GM12878 (cell line): ENCODE measurements at regions of chr16 and their contacts with region 1.

Region 1: GRCh38 chr16:50696575-50697420 is 3.4 kb downstream of the NOD2 start:
- DNase-seq: peak; percentile 82
- ATAC-seq: peak; percentile 76
- H3K4me3 ChIP-seq: peak overlapping the region; percentile 72; the same call in 1 of the 2 replicates
- H3K27ac ChIP-seq: peak overlapping the region; percentile 95
- H3K4me1 ChIP-seq: peaks cover 57% of the 10 kb centered on the region
- H3K27me3 ChIP-seq: no peaks in the 10 kb centered on the region
- CTCF ChIP-seq: no peak
- EP300 ChIP-seq: peak in 1 of 2 experiments; percentile 30; a peak in 2 of 4 replicates
- POLR2A ChIP-seq: 0 out of 2 replicates have a peak, but pooled peaks have one; percentile 47
- RAD21 ChIP-seq: no peak

Region 2: GRCh38 chr16:50273681-50274325 is 423.0 kb before region 1 on chr16:
- CTCF ChIA-PET with region 1: no interaction called
- POLR2A ChIA-PET with region 1: no interaction called
- RAD21 ChIA-PET with region 1: no interaction called
- SMC1A ChIA-PET with region 1: no interaction called
- in situ Hi-C with region 1: no loop called
- intact Hi-C with region 1: loop called (anchors 5 kb)
- DNase-seq: peak; percentile 64
- ATAC-seq: peak; percentile 80
- H3K4me3 ChIP-seq: peak overlapping the region; percentile 70
- H3K27ac ChIP-seq: peak overlapping the region; percentile 93
- H3K4me1 ChIP-seq: peaks cover 49% of the 10 kb centered on the region
- H3K27me3 ChIP-seq: no peaks in the 10 kb centered on the region
- CTCF ChIP-seq: no peak
- EP300 ChIP-seq: peak in 1 of 2 experiments; percentile 47; a peak in 2 of 4 replicates
- POLR2A ChIP-seq: peak; percentile 59
- RAD21 ChIP-seq: no peak

Region 3: DNA sequence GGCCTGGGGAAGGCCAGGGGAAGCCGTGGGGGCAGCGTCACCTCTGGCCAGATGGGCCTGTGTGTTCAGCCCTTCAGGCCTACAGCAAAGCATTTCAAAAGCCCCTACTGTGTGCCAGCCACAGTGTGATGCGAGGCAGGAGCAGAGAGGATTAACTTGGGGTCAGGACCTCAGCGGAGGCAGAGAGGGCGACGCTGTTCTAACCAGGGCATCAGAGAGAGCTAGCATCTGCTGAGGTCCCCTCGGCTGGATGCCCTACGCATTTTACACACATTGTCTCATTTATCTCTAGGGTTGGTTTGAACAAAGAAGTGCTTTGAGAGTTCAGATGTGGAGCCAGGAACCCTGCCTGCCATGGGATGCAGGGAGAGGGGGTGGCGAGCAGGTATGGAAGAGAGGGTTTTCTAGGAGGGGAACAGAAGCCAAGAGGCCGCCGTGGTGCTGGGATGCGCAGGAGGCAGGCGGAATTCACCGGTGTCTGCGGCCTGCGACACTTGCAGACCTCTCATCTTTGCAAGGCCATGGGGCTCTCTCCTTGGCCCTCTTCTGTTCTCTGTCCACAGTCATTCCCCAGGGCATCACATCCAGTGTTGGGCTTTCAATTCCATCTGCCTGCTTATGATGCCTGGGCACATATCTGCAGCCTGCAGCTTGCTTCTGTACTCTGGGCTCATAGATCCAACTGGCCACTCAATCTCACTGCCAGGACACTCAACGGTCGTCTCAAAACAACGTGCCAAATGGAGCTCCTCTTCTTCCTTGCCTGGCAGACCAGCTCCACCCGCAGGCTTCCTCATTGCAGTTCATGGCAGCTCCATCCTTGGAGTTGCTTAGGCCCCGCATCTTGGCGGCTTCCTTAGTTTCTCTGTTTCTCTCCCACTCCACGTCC is 156.7 kb before region 1 on chr16:
- CTCF ChIA-PET with region 1: no interaction called
- POLR2A ChIA-PET with region 1: no interaction called
- RAD21 ChIA-PET with region 1: no interaction called
- SMC1A ChIA-PET with region 1: no interaction called
- in situ Hi-C with region 1: no loop called
- intact Hi-C with region 1: no loop called
- DNase-seq: no peak
- ATAC-seq: no peak
- H3K4me3 ChIP-seq: no peak overlapping the region
- H3K27ac ChIP-seq: no peak overlapping the region
- H3K4me1 ChIP-seq: no peaks in the 10 kb centered on the region
- H3K27me3 ChIP-seq: no peaks in the 10 kb centered on the region; a peak in 2 of 4 replicates
- CTCF ChIP-seq: no peak
- EP300 ChIP-seq: no peak
- POLR2A ChIP-seq: no peak
- RAD21 ChIP-seq: no peak

Region 4: GRCh38 chr16:50611332-50611934 is 85.4 kb before region 1 on chr16:
- CTCF ChIA-PET with region 1: no interaction called
- POLR2A ChIA-PET with region 1: no interaction called
- RAD21 ChIA-PET with region 1: no interaction called
- SMC1A ChIA-PET with region 1: no interaction called
- in situ Hi-C with region 1: no loop called
- intact Hi-C with region 1: no loop called
- DNase-seq: no peak
- ATAC-seq: peak; percentile 58
- H3K4me3 ChIP-seq: no peak overlapping the region
- H3K27ac ChIP-seq: no peak overlapping the region
- H3K4me1 ChIP-seq: peaks cover 3% of the 10 kb centered on the region; the same call in 1 of the 2 replicates
- H3K27me3 ChIP-seq: no peaks in the 10 kb centered on the region
- CTCF ChIP-seq: 0 out of 6 replicates have a peak, but pooled peaks of 2 of the 3 experiments have one; percentile 2 to 12
- EP300 ChIP-seq: no peak
- POLR2A ChIP-seq: no peak
- RAD21 ChIP-seq: no peak

Region 5: DNA sequence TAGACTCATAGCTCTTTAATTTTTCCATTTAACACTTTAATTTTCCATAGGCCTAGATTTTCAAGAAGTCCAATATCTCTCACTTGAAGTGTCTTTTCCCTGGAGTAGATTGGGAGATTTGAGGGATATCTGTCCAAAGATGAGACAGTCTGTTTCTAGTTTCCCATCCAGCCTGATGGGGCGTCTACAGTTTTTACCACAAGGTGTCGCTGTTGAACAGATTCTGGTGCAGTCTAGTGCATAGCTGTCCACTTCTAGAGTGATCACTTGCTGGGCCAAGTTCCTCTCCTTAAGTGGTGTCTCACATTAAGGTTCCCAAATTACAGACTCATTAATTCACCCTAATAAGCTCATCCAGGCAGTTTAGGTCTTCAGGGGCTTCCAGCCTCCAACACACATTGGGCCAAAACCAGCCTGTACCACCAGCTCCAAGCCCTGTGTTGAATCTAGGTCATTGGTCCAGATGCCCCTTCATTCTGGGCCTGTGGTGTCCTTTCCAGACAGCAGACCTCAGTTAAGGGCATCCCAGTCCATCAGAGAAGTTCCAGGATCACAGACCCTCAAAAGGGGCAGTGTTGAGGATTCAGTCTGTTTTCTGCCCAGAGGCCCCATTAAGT is 25.0 kb before region 1 on chr16:
- CTCF ChIA-PET with region 1: interaction called, 86 read pairs
- POLR2A ChIA-PET with region 1: interaction called, 9 read pairs
- RAD21 ChIA-PET with region 1: interaction called, 28 read pairs
- SMC1A ChIA-PET with region 1: interaction called, 42 read pairs
- in situ Hi-C with region 1: no loop called
- intact Hi-C with region 1: no loop called
- DNase-seq: no peak
- ATAC-seq: peak; percentile 52
- H3K4me3 ChIP-seq: no peak overlapping the region
- H3K27ac ChIP-seq: no peak overlapping the region
- H3K4me1 ChIP-seq: peaks cover 10% of the 10 kb centered on the region
- H3K27me3 ChIP-seq: no peaks in the 10 kb centered on the region
- CTCF ChIP-seq: peak; percentile 54 to 61 (median 59); a peak in 5 of 6 replicates
- EP300 ChIP-seq: no peak
- POLR2A ChIP-seq: no peak
- RAD21 ChIP-seq: peak; percentile 73

Region 6: DNA sequence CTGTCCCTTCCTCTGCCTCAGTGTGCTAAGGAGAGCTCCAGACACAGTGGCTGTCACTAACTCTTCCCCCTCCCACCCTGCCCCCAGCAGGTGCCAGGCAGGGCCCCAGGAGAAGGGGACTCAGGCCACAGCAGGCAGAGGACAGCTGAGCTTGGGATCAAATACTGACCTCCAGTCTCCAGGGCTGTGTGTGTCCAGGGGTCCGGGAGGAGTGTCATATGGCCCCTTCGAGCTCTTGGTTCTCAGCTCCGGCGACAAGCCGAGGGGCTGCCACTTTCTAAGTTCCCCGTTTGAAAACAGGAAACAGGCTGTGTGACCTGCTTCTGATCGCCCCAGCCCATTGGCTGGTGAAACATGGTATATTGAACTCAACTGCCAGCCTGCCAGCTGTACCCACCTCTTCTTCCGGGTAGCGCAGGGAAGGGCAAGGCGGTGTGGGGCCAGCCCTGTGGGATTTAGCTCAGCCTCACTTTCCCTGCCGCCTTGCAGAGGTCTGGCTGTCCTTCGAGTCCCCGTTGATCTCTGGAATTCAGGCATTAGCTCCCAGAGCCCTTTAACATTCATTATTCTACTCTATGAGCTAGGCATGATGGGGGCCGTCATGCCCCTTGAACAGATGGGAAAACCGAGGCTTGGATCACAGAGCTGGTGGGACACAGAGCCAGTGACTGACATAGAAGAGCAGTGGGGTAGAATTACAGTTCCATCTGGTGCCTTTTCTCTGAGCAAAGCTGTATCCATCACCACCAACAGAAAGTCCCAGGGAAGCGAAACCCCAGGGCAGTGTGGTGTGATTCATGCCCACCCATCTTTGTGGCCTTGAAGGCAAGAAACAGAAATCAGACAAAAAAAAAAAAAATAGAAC is 15.5 kb before region 1 on chr16 and contains the start of gene SNX20:
- CTCF ChIA-PET with region 1: interaction called, 49 read pairs
- POLR2A ChIA-PET with region 1: interaction called, 116 read pairs
- RAD21 ChIA-PET with region 1: interaction called, 121 read pairs
- SMC1A ChIA-PET with region 1: interaction called, 190 read pairs
- in situ Hi-C with region 1: no loop called
- intact Hi-C with region 1: loop called (anchors 1 kb)
- DNase-seq: peak; percentile 63
- ATAC-seq: peak; percentile 65
- H3K4me3 ChIP-seq: peak within 1 kb of the TSS; percentile 72
- H3K27ac ChIP-seq: peak within 1 kb of the TSS; percentile 84
- H3K4me1 ChIP-seq: peaks cover 50% of the 10 kb centered on the region
- H3K27me3 ChIP-seq: no peaks in the 10 kb centered on the region
- CTCF ChIP-seq: no peak
- EP300 ChIP-seq: no peak
- POLR2A ChIP-seq: peak; percentile 68
- RAD21 ChIP-seq: no peak
- polyA plus RNA-seq, gene SNX20: 4.6 to 6.9 TPM

Region 7: GRCh38 chr16:50709053-50709684 is 12.4 kb after region 1 on chr16:
- CTCF ChIA-PET with region 1: interaction called, 10 read pairs
- POLR2A ChIA-PET with region 1: interaction called, 8 read pairs
- RAD21 ChIA-PET with region 1: interaction called, 9 read pairs
- SMC1A ChIA-PET with region 1: interaction called, 6 read pairs
- in situ Hi-C with region 1: no loop called
- intact Hi-C with region 1: no loop called
- DNase-seq: no peak
- ATAC-seq: peak; percentile 83
- H3K4me3 ChIP-seq: no peak overlapping the region
- H3K27ac ChIP-seq: peak overlapping the region; percentile 60
- H3K4me1 ChIP-seq: peaks cover 25% of the 10 kb centered on the region
- H3K27me3 ChIP-seq: no peaks in the 10 kb centered on the region
- CTCF ChIP-seq: no peak
- EP300 ChIP-seq: no peak
- POLR2A ChIP-seq: no peak
- RAD21 ChIP-seq: no peak

Region 8: DNA sequence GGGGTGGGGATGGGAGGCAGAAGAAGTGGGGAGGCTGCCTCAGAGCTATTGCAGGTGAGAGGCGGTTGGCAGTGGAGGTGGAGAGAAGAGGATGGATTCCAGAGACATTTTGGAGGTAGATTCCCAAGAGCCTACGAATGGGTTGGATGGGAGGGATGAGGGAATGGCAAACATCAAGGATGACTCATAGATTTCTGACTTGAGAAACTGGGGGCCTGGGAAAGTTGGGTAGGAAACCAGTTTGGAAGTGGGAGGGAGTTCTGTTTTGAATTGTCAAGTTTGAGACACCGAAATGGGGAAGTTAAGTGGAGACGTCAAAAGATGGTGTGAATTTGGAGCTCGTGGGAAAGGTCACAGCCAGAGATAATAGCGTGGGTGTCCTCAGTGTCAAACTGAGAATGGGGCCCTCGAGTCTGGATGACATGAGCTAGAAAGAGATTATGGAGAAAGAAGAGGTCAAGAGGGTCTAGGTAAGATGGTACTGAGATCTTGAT is 38.9 kb after region 1 on chr16:
- CTCF ChIA-PET with region 1: interaction called, 10 read pairs
- POLR2A ChIA-PET with region 1: interaction called, 37 read pairs
- RAD21 ChIA-PET with region 1: interaction called, 58 read pairs
- SMC1A ChIA-PET with region 1: interaction called, 30 read pairs
- in situ Hi-C with region 1: no loop called
- intact Hi-C with region 1: no loop called
- DNase-seq: peak; percentile 81
- ATAC-seq: peak; percentile 74
- H3K4me3 ChIP-seq: no peak overlapping the region
- H3K27ac ChIP-seq: peak overlapping the region; percentile 55
- H3K4me1 ChIP-seq: peaks cover 26% of the 10 kb centered on the region
- H3K27me3 ChIP-seq: no peaks in the 10 kb centered on the region
- CTCF ChIP-seq: no peak
- EP300 ChIP-seq: peak; percentile 68 to 83; a peak in 3 of 4 replicates
- POLR2A ChIP-seq: no peak
- RAD21 ChIP-seq: no peak

Region 9: GRCh38 chr16:50741808-50742575 is 45.2 kb after region 1 on chr16 and contains the start of gene CYLD:
- CTCF ChIA-PET with region 1: interaction called, 63 read pairs
- POLR2A ChIA-PET with region 1: interaction called, 104 read pairs
- RAD21 ChIA-PET with region 1: interaction called, 112 read pairs
- SMC1A ChIA-PET with region 1: interaction called, 59 read pairs
- in situ Hi-C with region 1: no loop called
- intact Hi-C with region 1: loop called (anchors 2 kb)
- DNase-seq: peak; percentile 95
- ATAC-seq: peak; percentile 95
- H3K4me3 ChIP-seq: peak within 1 kb of the TSS; percentile 84
- H3K27ac ChIP-seq: peak within 1 kb of the TSS; percentile 98
- H3K4me1 ChIP-seq: peaks cover 21% of the 10 kb centered on the region
- H3K27me3 ChIP-seq: no peaks in the 10 kb centered on the region
- CTCF ChIP-seq: no peak
- EP300 ChIP-seq: no peak
- POLR2A ChIP-seq: peak; percentile 36
- RAD21 ChIP-seq: no peak
- polyA plus RNA-seq, gene CYLD: 19.2 to 27.0 TPM